Activated CD4-positive, alpha-beta T cell treated with anti-CD3 and anti-CD28 coated beads for 36 hours (primary cell): ENCODE measurements at regions of chr13 and their contacts with region 1.

Region 1: DNA sequence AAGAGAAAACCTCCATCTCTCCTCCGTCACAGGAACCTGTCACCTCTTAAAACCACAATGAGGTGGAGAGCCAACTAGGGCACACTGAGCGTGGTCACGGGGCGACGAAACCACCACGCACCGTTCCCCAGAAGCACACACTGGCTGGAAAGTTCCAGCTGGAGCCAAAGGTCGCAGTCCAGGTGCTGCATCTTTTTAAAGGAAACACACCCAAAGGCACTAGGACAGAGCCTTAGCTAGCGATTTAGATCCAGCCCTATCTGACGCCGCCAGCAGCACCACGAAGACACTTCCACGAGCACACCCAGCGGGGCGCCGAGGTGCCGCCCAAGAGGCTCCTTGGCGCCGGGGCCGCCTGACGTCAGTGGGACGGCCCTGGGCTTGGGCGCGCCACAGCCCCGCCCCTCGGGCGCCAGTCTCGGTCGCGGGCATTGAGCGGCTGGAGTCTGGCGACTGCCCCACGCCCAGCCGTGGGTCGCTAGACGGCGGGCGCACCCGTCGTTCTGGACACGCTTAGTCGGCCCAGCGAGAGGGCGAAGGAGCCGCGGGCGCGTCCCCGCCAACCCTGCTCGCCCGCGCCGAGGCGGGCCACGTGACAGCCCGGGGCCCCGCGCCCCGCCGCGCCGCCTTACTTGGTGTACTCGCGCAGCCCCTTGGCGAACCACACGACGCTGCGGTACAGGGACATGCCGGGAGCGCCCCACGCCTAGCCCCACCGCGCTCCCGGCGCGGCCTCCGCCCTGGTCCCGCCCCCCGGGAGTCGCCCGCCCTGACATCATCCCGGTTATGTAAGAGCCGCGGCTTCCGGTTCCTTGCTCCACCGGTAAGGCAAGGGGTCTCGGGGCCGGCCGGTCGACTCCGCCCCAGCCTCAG is at the start of gene DHRS12:
- DNase-seq: peak; percentile 90
- ATAC-seq: peak; percentile 77
- H3K4me3 Mint-ChIP-seq: peak within 1 kb of the TSS; percentile 87
- H3K27ac Mint-ChIP-seq: peak within 1 kb of the TSS; percentile 99
- H3K4me1 Mint-ChIP-seq: peaks cover 50% of the 10 kb centered on the region
- H3K27me3 Mint-ChIP-seq: no peaks in the 10 kb centered on the region
- total RNA-seq, gene DHRS12: 4.9 to 5.3 TPM

Region 2: GRCh38 chr13:50365408-50366391 is 1438.0 kb before region 1 on chr13:
- CTCF ChIA-PET with region 1: no interaction called
- POLR2A ChIA-PET with region 1: no interaction called
- intact Hi-C with region 1: loop called in 1 of 2 experiments (anchors 5 kb)
- DNase-seq: peak; percentile 75
- ATAC-seq: peak; percentile 64
- H3K4me3 Mint-ChIP-seq: peak overlapping the region; percentile 13
- H3K27ac Mint-ChIP-seq: peak overlapping the region; percentile 71
- H3K4me1 Mint-ChIP-seq: peaks cover 43% of the 10 kb centered on the region
- H3K27me3 Mint-ChIP-seq: peaks cover 32% of the 10 kb centered on the region

Region 3: GRCh38 chr13:51583875-51584730 is 219.6 kb before region 1 on chr13 and contains the start of gene WDFY2:
- CTCF ChIA-PET with region 1: interaction called, 4 read pairs
- POLR2A ChIA-PET with region 1: no interaction called
- intact Hi-C with region 1: loop called (anchors 1 kb)
- DNase-seq: peak; percentile 100
- ATAC-seq: peak; percentile 88
- H3K4me3 Mint-ChIP-seq: peak within 1 kb of the TSS; percentile 89
- H3K27ac Mint-ChIP-seq: peak within 1 kb of the TSS; percentile 95
- H3K4me1 Mint-ChIP-seq: peaks cover 37% of the 10 kb centered on the region
- H3K27me3 Mint-ChIP-seq: no peaks in the 10 kb centered on the region
- total RNA-seq, gene WDFY2: 7.4 to 9.5 TPM

Region 4: DNA sequence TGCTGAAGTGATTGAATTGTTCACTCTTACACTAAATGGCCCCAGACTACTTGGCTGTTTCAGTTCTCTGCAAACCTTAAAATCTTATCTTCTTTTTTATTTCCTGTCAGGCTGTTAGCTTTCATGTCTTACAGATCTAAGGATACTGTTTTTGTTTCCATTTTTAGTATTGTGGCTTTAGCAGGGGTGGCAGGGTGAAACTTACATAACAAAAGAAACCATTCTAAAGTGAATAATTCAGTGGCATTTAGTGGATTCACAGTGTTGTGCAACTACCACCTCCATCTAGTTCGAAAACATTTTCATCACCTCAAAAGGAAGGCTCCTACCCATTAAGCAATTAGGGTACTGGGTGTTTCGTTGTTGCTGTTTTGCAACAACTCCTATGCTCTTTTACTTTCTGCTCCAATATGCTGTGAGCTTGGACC is 21.5 kb after region 1 on chr13:
- CTCF ChIA-PET with region 1: interaction called, 154 read pairs
- POLR2A ChIA-PET with region 1: interaction called, 3 read pairs
- intact Hi-C with region 1: loop called (anchors 1 kb)
- DNase-seq: no peak
- ATAC-seq: peak; percentile 40
- H3K4me3 Mint-ChIP-seq: peak overlapping the region; percentile 69
- H3K27ac Mint-ChIP-seq: peak overlapping the region; percentile 92
- H3K4me1 Mint-ChIP-seq: peaks cover 91% of the 10 kb centered on the region
- H3K27me3 Mint-ChIP-seq: no peaks in the 10 kb centered on the region

Region 5: GRCh38 chr13:52194184-52194868 is 390.7 kb after region 1 on chr13:
- CTCF ChIA-PET with region 1: no interaction called
- POLR2A ChIA-PET with region 1: no interaction called
- intact Hi-C with region 1: loop called in 1 of 2 experiments (anchors 2 kb)
- DNase-seq: peak; percentile 92
- ATAC-seq: peak; percentile 83
- H3K4me3 Mint-ChIP-seq: peak overlapping the region; percentile 86
- H3K27ac Mint-ChIP-seq: peak overlapping the region; percentile 100
- H3K4me1 Mint-ChIP-seq: peaks cover 32% of the 10 kb centered on the region
- H3K27me3 Mint-ChIP-seq: no peaks in the 10 kb centered on the region

Region 6: GRCh38 chr13:53010374-53011105 is 1206.9 kb after region 1 on chr13:
- CTCF ChIA-PET with region 1: no interaction called
- POLR2A ChIA-PET with region 1: no interaction called
- intact Hi-C with region 1: no loop called
- DNase-seq: no peak
- ATAC-seq: no peak
- H3K4me3 Mint-ChIP-seq: no peak overlapping the region
- H3K27ac Mint-ChIP-seq: no peak overlapping the region
- H3K4me1 Mint-ChIP-seq: no peaks in the 10 kb centered on the region
- H3K27me3 Mint-ChIP-seq: peaks cover 18% of the 10 kb centered on the region